Esophagus squamous epithelium (tissue), 5 donors: ENCODE measurements at regions of chr20 and their contacts with region 1.

Region 1: GRCh38 chr20:20568604-20569205 is 143.7 kb downstream of the RALGAPA2 start:
- DNase-seq: no peak
- H3K4me3 ChIP-seq: no peak overlapping the region
- H3K27ac ChIP-seq: no peak overlapping the region
- H3K4me1 ChIP-seq: no peaks in the 10 kb centered on the region
- H3K27me3 ChIP-seq: no peaks in the 10 kb centered on the region
- CTCF ChIP-seq: peak; percentile 43 to 79 (median 67)
- POLR2A ChIP-seq: no peak

Region 2: DNA sequence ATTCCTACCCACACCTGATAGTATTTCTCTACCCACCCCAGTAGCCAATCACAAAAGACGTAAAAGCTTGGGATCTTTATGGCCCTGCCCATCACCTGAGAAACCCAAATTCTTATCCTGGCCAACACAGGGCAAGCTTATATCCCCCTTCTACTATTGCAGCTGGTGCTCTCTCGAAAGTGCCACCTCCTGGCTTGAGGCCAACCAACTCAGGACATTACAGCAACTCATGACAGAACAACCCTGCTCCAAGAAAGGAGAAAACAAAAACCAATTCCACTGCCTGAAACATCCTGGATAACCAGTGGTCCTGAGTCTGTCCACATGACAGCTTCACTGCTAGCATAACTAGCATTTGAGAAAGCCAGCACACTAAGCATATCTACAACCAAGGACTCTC is 418.5 kb before region 1 on chr20:
- intact Hi-C with region 1: no loop called
- DNase-seq: no peak
- H3K4me3 ChIP-seq: no peak overlapping the region
- H3K27ac ChIP-seq: no peak overlapping the region
- H3K4me1 ChIP-seq: no peaks in the 10 kb centered on the region
- H3K27me3 ChIP-seq: peaks cover 0 to 7% (median 0%) of the 10 kb centered on the region in 4 donors
- CTCF ChIP-seq: no peak
- POLR2A ChIP-seq: no peak

Region 3: DNA sequence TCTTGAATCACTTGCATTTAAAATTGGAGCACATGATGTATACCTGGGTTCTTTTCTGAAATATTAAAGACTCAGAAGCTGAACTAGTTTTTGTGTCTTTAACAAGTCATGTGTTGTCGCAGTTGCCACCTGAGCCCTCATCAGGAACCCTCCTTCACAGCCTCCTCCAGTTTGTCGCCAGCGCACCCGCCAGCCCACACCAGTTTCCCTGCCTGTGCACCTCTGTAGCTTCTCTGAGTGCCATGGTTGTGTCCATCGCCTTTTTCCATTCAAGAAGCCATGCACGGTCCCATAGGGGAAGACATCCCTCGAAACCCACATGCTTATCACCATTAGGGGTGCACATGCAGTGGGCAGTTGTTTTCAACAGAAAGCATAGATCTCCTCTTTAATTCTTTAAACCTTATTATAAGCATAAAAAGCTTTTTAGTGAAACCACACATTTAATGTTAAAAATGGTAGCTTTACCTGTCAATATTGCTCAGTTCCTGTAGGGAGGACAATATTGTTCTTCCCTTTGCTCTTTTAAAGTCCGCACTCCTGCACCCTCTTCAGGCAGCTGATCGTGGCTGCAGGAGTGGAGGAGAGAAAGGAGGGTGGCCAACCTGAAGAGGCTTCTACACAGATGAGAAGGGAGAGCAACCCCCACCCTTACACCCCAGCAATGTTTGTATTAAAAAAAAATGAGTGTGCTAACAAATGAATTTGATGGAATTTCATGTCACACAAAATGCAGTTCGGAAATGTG is 394.4 kb before region 1 on chr20:
- intact Hi-C with region 1: no loop called
- DNase-seq: no peak
- H3K4me3 ChIP-seq: no peak overlapping the region
- H3K27ac ChIP-seq: no peak overlapping the region
- H3K4me1 ChIP-seq: no peaks in the 10 kb centered on the region
- H3K27me3 ChIP-seq: no peaks in the 10 kb centered on the region
- CTCF ChIP-seq: no peak
- POLR2A ChIP-seq: no peak

Region 4: GRCh38 chr20:20360464-20360863 is 208.2 kb before region 1 on chr20:
- intact Hi-C with region 1: loop called (anchors 10 kb)
- DNase-seq: no peak
- H3K4me3 ChIP-seq: no peak overlapping the region
- H3K27ac ChIP-seq: no peak overlapping the region
- H3K4me1 ChIP-seq: peaks cover 13 to 33% (median 19%) of the 10 kb centered on the region in 3 donors
- H3K27me3 ChIP-seq: peaks cover 17 to 74% (median 21%) of the 10 kb centered on the region in 4 donors
- CTCF ChIP-seq: peak; percentile 43 to 81 (median 68)
- POLR2A ChIP-seq: no peak

Region 5: DNA sequence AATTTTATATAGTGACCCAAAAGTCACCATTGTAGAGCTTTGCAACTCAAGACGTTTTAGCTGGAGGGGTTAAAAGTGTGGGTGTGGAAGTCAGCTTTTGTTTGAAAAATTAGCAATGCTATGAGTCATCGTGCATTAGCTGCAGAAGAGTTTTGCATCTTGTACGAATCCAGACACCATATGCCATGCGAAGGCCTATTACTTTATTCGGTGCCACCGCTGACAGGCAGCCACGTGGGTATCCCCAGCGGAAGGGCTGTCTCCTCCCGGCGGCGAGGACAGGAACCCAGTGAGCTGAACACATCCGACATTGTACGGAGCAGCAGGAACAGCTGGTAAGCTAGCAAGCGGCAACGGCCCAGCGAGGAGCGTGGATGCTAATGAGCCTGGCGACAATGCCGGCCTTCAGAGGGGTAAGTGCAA is 116.4 kb before region 1 on chr20:
- intact Hi-C with region 1: no loop called
- DNase-seq: peak; percentile 25
- H3K4me3 ChIP-seq: peak overlapping the region in 2 of 4 donors; percentile 10 to 51
- H3K27ac ChIP-seq: no peak overlapping the region
- H3K4me1 ChIP-seq: peaks cover 0 to 24% (median 12%) of the 10 kb centered on the region in 3 donors
- H3K27me3 ChIP-seq: no peaks in the 10 kb centered on the region
- CTCF ChIP-seq: peak in 1 of 6 experiments; percentile 19
- POLR2A ChIP-seq: no peak